ENCODE measurements at regions of chr14 and their contacts with region 1.

Region 1: GRCh38 chr14:35301735-35302528 is 9.8 kb downstream of the PSMA6 start:
- H3K4me3 Mint-ChIP-seq: no peak overlapping the region
- H3K27ac Mint-ChIP-seq: no peak overlapping the region
- H3K4me1 Mint-ChIP-seq: peaks cover 48% of the 10 kb centered on the region
- H3K27me3 Mint-ChIP-seq: no peaks in the 10 kb centered on the region

Region 2: GRCh38 chr14:35268946-35269345 is 33.0 kb before region 1 on chr14:
- intact Hi-C with region 1: loop called (anchors 5 kb)
- H3K4me3 Mint-ChIP-seq: no peak overlapping the region
- H3K27ac Mint-ChIP-seq: no peak overlapping the region
- H3K4me1 Mint-ChIP-seq: no peaks in the 10 kb centered on the region
- H3K27me3 Mint-ChIP-seq: no peaks in the 10 kb centered on the region

Measured in dendritic cell treated with granulocyte-macrophage colony-stimulating factor and Interleukin-4, amounts not matched to agents 40 ng/mL and 50 ng/mL, for 4 days (primary cell).